H1 (cell line): ENCODE measurements at regions of chr16 and their contacts with region 1.

Region 1: DNA sequence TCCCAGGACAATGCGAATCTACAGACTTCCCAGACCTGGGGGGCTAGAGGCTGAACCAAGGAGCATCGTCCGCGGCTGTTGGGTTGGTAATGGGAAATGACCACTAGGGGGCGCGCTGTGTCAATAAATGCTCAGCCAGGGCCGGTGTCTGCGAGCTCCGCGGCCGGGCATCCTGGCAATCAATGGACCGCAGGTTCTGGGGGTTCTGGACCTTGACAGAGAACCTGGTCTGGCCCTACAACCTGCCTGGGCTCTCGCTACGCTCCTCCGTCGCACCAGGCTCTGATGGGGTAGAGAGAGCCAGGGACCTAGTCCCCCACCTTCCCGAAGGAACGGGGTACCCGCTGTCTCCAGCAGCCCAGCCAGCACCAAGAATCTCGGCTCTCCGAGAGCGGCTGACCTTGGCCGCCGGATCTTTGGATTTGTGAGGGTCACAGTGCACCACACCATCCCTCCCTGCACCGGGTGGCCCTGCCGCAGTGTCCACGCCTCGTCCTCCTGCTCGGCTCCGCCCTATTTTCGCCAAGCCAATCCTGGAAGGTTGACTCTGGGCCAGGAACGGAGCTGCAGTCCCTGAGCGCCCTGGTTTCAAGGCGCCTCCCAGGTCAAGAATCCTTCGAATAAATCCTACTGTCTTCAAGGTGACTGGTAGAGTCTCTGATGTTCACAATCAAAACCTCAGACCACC is 20.4 kb upstream of the BEAN1 start:
- DNase-seq: peak; percentile 54 to 97
- H3K4me3 ChIP-seq: peak overlapping the region; percentile 21 to 72 (median 62); a peak in 7 of 8 replicates
- H3K27ac ChIP-seq: no peak overlapping the region
- H3K4me1 ChIP-seq: no peaks in the 10 kb centered on the region; a peak in 1 of 7 replicates
- H3K27me3 ChIP-seq: peaks cover 0 to 3% (median 2%) of the 10 kb centered on the region in 4 experiments; a peak in 2 of 7 replicates
- CTCF ChIP-seq: peak; percentile 82 to 92 (median 84)
- EP300 ChIP-seq: no peak
- POLR2A ChIP-seq: no peak
- RAD21 ChIP-seq: peak; percentile 95 to 96

Region 2: DNA sequence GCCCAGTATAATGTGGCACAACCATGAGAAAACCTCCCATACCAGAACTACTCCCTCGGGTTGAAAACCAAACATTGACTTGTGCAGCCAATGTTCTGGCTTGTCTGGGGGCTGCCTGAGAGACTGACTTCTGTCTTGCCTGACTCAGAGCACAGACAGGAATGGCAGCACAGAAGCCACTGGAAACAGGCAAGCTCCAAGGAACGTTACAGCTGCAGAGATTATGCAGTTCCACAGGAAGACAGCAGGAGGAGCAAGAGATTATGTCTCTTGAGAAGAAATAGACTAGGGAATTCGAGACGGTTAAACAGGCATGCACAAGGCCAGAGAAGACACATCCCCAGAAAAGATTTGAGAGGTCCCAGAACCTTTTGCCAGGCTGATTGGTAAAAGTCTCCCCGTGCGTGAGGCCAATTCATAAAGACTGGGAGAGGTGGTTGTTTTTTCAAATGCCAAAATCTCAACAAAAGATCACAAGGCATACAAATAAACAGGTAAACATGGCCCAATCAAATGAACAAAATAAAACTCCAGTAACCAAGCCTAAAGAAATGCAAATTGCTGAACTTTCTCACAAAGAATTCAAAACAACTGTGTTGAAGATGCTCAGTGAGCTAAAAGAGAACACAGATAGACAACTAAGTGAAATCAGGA is 130.8 kb before region 1 on chr16:
- CTCF ChIA-PET with region 1: no interaction called
- POLR2A ChIA-PET with region 1: no interaction called
- DNase-seq: peak; percentile 50 to 77
- H3K4me3 ChIP-seq: no peak overlapping the region
- H3K27ac ChIP-seq: no peak overlapping the region
- H3K4me1 ChIP-seq: peaks cover 0 to 5% (median 2%) of the 10 kb centered on the region in 4 experiments; a peak in 3 of 7 replicates
- H3K27me3 ChIP-seq: peaks cover 0 to 7% (median 1%) of the 10 kb centered on the region in 4 experiments; a peak in 3 of 7 replicates
- CTCF ChIP-seq: peak; percentile 11 to 83 (median 76)
- EP300 ChIP-seq: no peak
- POLR2A ChIP-seq: no peak
- RAD21 ChIP-seq: peak; percentile 61 to 73

Region 3: GRCh38 chr16:66357153-66357928 is 49.3 kb before region 1 on chr16:
- CTCF ChIA-PET with region 1: interaction called, 16 read pairs
- POLR2A ChIA-PET with region 1: no interaction called
- DNase-seq: peak in 1 of 2 experiments; percentile 27
- H3K4me3 ChIP-seq: no peak overlapping the region
- H3K27ac ChIP-seq: no peak overlapping the region
- H3K4me1 ChIP-seq: peaks cover 0 to 8% (median 1%) of the 10 kb centered on the region in 4 experiments; a peak in 3 of 7 replicates
- H3K27me3 ChIP-seq: peaks cover 0 to 3% (median 0%) of the 10 kb centered on the region in 4 experiments; a peak in 1 of 7 replicates
- CTCF ChIP-seq: peak; percentile 42 to 76 (median 72)
- EP300 ChIP-seq: no peak
- POLR2A ChIP-seq: no peak
- RAD21 ChIP-seq: peak; percentile 44 to 56

Region 4: GRCh38 chr16:66391726-66392670 is 14.7 kb before region 1 on chr16:
- CTCF ChIA-PET with region 1: interaction called, 20 read pairs
- POLR2A ChIA-PET with region 1: interaction called, 3 read pairs
- DNase-seq: no peak
- H3K4me3 ChIP-seq: no peak overlapping the region
- H3K27ac ChIP-seq: no peak overlapping the region
- H3K4me1 ChIP-seq: no peaks in the 10 kb centered on the region
- H3K27me3 ChIP-seq: no peaks in the 10 kb centered on the region
- CTCF ChIP-seq: no peak
- EP300 ChIP-seq: no peak
- POLR2A ChIP-seq: no peak
- RAD21 ChIP-seq: no peak

Region 5: DNA sequence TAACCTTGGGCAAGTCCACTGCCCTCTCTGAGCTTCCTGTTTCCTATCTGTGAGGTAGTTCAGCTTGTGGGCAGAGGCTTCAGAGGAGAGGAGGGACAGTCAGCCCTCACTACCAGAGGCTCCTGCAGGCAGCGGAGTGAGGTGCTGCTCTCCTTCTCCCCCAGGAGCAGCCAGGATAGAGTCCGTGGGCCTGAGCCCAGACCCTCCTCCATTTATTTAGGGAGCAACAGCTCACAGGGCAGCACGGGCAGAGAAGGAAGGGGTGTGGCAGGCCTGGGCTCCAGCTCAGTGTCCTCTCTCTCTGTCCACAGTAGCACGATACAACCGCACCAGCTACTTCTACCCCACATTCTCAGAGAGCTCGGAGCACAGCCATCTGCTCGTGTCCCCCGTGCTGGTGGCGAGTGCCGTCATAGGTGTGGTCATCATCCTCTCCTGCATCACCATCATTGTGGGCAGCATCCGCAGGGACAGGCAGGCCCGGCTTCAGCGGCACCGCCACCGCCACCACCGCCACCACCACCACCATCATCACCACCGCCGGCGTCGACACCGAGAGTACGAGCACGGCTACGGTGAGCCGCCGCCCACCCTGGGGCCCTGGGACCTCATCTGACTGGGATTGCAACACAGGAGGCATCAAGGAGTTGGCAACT is 62.7 kb after region 1 on chr16:
- CTCF ChIA-PET with region 1: interaction called, 226 read pairs
- POLR2A ChIA-PET with region 1: no interaction called
- DNase-seq: no peak
- H3K4me3 ChIP-seq: no peak overlapping the region
- H3K27ac ChIP-seq: no peak overlapping the region
- H3K4me1 ChIP-seq: no peaks in the 10 kb centered on the region; a peak in 1 of 7 replicates
- H3K27me3 ChIP-seq: no peaks in the 10 kb centered on the region; a peak in 2 of 7 replicates
- CTCF ChIP-seq: no peak
- EP300 ChIP-seq: no peak
- POLR2A ChIP-seq: no peak
- RAD21 ChIP-seq: no peak

Region 6: GRCh38 chr16:66515596-66516510 is 109.2 kb after region 1 on chr16:
- CTCF ChIA-PET with region 1: interaction called, 10 read pairs
- POLR2A ChIA-PET with region 1: interaction called, 4 read pairs
- DNase-seq: peak; percentile 13 to 60
- H3K4me3 ChIP-seq: no peak overlapping the region
- H3K27ac ChIP-seq: no peak overlapping the region
- H3K4me1 ChIP-seq: peaks cover 7 to 19% (median 9%) of the 10 kb centered on the region in 4 experiments; a peak in 6 of 7 replicates
- H3K27me3 ChIP-seq: no peaks in the 10 kb centered on the region
- CTCF ChIP-seq: peak; percentile 51 to 69 (median 67)
- EP300 ChIP-seq: no peak
- POLR2A ChIP-seq: no peak
- RAD21 ChIP-seq: peak; percentile 73 to 86

Region 7: DNA sequence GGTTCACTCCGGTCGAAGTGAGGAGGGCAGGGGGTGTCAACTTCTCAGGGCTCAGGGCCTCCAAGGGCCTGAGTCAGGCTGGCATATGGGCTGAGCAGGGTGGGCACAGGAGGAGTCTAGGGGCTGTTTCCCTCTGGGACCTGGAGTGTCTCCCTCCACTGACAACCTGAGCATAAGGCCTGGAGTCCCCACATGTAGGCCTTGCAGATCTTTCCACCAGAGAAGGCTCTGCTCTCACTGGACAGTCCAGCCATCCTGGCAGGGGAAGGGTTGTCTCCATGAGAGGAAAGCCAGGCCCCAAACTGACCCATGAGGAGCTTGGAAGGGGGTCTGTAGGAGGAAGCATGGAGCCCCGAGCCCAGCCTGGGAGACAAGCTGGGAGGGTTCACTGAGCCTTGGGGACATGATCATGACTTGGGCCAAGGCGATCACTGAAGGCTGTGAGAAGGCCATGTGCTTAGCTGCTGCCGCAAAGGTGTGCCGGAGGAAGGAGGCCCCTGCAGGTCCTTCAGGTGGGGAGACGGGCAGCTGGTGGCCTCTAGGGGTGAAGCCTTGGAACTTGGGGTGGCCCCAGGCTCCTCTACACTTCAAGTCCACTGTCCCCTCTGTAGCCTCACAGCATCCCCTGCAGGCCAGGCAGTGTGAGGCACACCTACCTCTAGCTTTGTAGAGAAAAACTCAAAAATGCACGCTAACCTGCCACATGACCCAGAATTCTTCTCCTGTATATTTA is 182.5 kb after region 1 on chr16:
- CTCF ChIA-PET with region 1: interaction called, 29 read pairs
- POLR2A ChIA-PET with region 1: interaction called, 3 read pairs
- DNase-seq: peak in 1 of 2 experiments; percentile 73
- H3K4me3 ChIP-seq: no peak overlapping the region
- H3K27ac ChIP-seq: no peak overlapping the region
- H3K4me1 ChIP-seq: no peaks in the 10 kb centered on the region
- H3K27me3 ChIP-seq: no peaks in the 10 kb centered on the region
- CTCF ChIP-seq: peak; percentile 89 to 99 (median 94)
- EP300 ChIP-seq: no peak
- POLR2A ChIP-seq: no peak
- RAD21 ChIP-seq: peak; percentile 93 to 94

Region 8: GRCh38 chr16:66618588-66619375 is 212.1 kb after region 1 on chr16:
- CTCF ChIA-PET with region 1: no interaction called
- POLR2A ChIA-PET with region 1: no interaction called
- DNase-seq: no peak
- H3K4me3 ChIP-seq: no peak overlapping the region
- H3K27ac ChIP-seq: no peak overlapping the region
- H3K4me1 ChIP-seq: peaks cover 3 to 14% (median 7%) of the 10 kb centered on the region in 4 experiments
- H3K27me3 ChIP-seq: no peaks in the 10 kb centered on the region
- CTCF ChIP-seq: no peak
- EP300 ChIP-seq: no peak
- POLR2A ChIP-seq: no peak
- RAD21 ChIP-seq: no peak